ENCODE measurements at regions of chr17 and their contacts with region 1.

Region 1: GRCh38 chr17:20121359-20122253 is 112.4 kb downstream of the SPECC1 start:
- DNase-seq: peak; percentile 64 to 89
- H3K4me3 ChIP-seq: no peak overlapping the region
- H3K27ac ChIP-seq: no peak overlapping the region
- H3K4me1 ChIP-seq: peaks cover 0 to 2% (median 0%) of the 10 kb centered on the region in 4 experiments; a peak in 2 of 7 replicates
- H3K27me3 ChIP-seq: no peaks in the 10 kb centered on the region
- CTCF ChIP-seq: peak; percentile 81 to 96 (median 91)
- EP300 ChIP-seq: no peak
- POLR2A ChIP-seq: no peak
- RAD21 ChIP-seq: peak; percentile 96 to 98

Region 2: DNA sequence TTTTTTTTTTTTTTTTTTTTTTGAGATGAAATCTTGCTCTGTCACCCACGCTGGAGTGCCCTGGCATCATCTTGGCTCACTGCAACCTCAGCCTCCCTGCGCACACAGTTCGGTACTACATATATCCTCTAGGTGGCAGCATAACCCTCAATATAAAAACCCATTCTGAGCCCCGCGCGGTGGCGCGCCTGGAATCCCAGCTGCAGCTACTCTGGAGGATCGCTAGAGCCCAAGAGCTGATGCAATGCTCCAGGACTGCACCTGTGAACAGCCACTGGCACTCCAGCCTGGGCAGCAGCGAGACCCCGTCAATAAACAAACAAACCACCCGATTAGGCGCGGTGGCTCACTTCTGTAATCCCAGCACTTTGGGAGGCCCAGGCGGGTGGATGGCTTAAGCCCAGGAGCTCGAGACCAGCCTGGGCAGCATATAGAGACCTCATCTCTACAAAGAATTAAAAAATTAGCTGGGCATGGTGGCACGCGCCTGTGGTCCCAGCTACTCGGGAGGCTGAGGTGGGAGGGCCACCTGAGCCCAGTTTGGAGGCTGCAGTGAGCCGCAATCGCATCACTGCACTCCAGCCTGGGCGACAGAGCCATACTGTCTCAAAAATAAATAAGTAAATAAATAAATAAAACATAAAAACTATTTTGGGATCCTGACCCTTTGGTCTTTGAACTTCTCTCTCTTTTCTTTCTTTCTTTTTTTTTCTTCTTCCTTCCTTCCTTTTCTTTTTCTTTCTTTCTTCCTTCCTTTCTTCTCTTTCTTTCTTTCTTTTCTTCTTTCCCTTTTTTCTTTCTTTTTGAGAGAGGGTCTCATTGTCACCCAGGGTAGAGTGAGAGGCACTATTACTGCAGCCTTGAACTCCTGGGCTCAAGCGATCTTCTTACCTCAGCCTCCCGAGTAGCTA is 128.5 kb before region 1 on chr17:
- CTCF ChIA-PET with region 1: interaction called, 20 read pairs
- POLR2A ChIA-PET with region 1: no interaction called
- DNase-seq: peak; percentile 87 to 93
- H3K4me3 ChIP-seq: peak overlapping the region in 1 of 4 experiments; percentile 36; a peak in 1 of 8 replicates
- H3K27ac ChIP-seq: no peak overlapping the region
- H3K4me1 ChIP-seq: no peaks in the 10 kb centered on the region
- H3K27me3 ChIP-seq: no peaks in the 10 kb centered on the region
- CTCF ChIP-seq: peak; percentile 63 to 97 (median 74)
- EP300 ChIP-seq: no peak
- POLR2A ChIP-seq: no peak
- RAD21 ChIP-seq: peak; percentile 85 to 91

Region 3: DNA sequence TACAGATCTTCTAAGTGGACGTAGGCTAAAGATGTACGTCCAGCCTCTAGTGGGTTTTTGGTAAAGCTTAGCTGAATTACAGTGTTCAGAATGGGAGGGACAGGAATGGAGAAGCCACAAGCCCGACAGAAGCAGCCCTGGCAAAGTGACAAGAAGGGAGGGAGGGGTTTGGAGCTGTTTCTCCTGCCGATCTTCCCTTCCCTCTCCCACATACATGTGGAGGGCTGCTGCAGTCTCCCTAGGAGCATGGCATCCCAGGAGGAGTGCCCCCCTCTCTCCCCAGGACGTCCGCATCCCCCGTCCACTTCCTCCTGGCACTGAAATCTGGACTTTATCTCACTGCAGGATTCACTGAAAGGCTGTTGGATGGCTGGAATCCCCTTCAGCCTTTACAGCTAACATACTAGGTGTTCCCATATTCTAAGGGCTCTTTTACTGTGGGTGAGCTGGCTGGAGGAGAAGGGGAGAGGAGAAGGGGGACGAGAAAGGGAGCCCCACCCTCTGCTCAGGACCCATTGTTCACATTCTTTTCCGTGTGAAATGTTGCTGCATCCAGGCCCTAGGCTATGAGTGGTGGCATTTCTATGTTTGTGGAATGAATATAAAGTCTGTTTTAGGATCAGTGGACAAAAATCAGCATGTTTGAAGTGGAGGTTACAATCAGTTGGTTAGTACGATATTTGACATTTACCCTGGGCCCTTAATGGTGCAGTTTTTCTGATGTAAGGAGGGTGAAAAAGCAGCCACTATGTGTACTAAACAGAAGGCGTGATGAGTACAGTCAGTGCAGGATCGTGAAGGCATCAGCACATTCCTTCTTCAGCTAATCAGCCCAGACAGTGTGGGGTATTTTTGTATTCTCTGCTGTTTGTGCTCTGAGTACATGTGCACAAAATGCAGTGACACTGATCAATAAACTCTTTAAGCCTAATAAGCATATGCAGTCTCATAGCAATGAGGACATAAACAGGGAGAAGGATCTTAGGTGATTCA is 17.9 kb before region 1 on chr17:
- CTCF ChIA-PET with region 1: interaction called, 11 read pairs
- POLR2A ChIA-PET with region 1: no interaction called
- DNase-seq: no peak
- H3K4me3 ChIP-seq: no peak overlapping the region
- H3K27ac ChIP-seq: no peak overlapping the region
- H3K4me1 ChIP-seq: peaks cover 0 to 4% (median 0%) of the 10 kb centered on the region in 4 experiments; a peak in 2 of 7 replicates
- H3K27me3 ChIP-seq: no peaks in the 10 kb centered on the region
- CTCF ChIP-seq: no peak
- EP300 ChIP-seq: no peak
- POLR2A ChIP-seq: no peak
- RAD21 ChIP-seq: no peak

Region 4: DNA sequence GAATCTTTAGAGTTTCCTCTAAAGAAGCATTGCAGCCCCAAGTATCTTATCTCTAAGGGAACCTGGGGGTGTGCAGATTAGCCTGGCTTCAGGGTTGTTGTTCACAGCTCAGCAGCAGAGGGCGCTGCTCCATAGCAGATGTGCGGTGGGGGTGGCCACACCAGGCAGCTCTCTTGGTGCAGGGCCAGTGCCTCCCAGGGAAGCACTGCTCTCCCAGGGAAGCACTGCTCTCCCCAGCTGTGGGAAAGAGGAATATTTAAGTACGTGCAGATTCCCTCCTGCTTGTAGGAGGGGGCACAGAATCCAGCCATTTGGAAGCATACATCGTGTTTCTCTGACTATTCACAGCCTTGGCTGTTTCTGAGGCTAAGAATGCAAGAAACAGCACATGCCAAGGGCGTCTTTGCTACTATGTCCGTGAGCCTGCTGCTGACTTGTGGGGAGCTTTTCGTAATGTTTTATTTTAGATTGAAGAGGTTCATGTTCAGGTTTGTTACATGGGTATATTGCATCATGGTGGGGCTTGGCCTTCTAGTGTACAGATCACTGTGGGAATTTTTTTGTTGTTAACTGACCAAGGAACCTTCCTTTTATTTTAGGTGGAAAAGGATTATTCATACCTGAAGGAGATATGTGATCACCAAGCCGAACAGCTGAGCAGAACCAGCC is 105.3 kb after region 1 on chr17:
- CTCF ChIA-PET with region 1: interaction called, 26 read pairs
- POLR2A ChIA-PET with region 1: no interaction called
- DNase-seq: peak; percentile 74 to 93
- H3K4me3 ChIP-seq: no peak overlapping the region
- H3K27ac ChIP-seq: no peak overlapping the region; the same call in 1 of the 2 replicates
- H3K4me1 ChIP-seq: peaks cover 2 to 16% (median 10%) of the 10 kb centered on the region in 4 experiments
- H3K27me3 ChIP-seq: no peaks in the 10 kb centered on the region
- CTCF ChIP-seq: peak; percentile 87 to 95 (median 89)
- EP300 ChIP-seq: no peak
- POLR2A ChIP-seq: no peak
- RAD21 ChIP-seq: peak; percentile 91 to 92

Region 5: DNA sequence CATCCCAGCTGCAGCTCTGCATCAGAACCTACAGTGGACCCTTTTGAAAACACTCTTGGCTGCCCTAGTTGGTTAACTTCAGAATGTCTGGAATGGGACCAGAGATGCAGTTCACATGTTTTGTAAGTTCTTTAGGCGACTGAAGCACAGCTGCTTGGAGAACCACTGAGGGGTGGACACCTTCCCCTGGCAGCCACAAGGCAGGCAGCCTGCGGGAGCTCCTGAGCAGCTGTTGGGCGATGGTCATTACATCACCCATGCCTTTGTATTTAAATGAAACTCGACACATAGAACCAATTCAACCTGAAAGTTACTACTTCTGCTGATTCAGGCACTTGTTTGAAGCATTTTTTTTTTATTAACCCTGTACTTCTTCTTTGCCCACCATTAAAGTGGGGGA is 194.2 kb after region 1 on chr17:
- CTCF ChIA-PET with region 1: interaction called, 18 read pairs
- POLR2A ChIA-PET with region 1: interaction called, 3 read pairs
- DNase-seq: no peak
- H3K4me3 ChIP-seq: no peak overlapping the region
- H3K27ac ChIP-seq: no peak overlapping the region
- H3K4me1 ChIP-seq: no peaks in the 10 kb centered on the region; a peak in 2 of 7 replicates
- H3K27me3 ChIP-seq: no peaks in the 10 kb centered on the region
- CTCF ChIP-seq: no peak
- EP300 ChIP-seq: no peak
- POLR2A ChIP-seq: no peak
- RAD21 ChIP-seq: no peak